ENCODE measurements at regions of chr10 and their contacts with region 1.

Region 1: DNA sequence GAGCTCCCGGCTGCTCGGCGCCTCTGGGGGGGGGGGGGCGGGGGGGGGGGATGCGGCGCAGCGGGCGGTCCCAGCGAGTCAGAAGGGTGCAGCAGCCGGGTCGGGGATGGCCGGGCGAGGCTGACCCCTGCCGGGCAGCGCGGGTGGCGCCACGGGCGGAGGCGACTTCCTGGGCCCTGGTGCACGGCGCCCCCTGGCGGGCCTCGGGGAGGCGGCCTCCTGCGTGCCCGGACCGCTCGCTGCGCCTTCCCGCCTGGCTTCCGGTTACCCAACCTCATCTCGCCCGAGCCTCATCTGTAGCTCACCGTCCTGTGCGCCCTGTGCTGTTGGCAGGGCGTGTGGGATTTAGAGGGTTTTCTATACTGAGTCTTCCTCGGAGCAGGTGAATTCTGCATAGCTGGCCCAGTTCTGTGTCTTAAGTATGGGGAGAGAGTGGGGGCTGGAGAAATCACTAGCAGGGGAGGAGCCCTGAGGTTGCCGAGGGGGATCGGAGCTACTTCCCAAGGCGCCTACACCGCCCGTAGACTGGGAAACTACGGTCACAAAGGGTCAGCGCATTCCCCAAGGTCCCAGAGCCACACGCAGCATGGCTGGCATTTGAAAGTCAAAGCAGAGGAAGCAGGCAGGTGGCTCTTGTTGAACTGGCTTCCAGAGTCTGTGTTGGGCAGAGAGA is 28.3 kb upstream of the WDFY4 start:
- DNase-seq: peak; percentile 58 to 92
- ATAC-seq: peak; percentile 79 to 91
- H3K4me3 ChIP-seq: peak overlapping the region; percentile 56
- H3K27ac ChIP-seq: peak overlapping the region; percentile 74 to 88
- H3K4me1 ChIP-seq: 0 out of 3 replicates have a peak, but pooled peaks cover 3% of the 10 kb centered on the region
- CTCF ChIP-seq: peak; percentile 99
- EP300 ChIP-seq: no peak
- POLR2A ChIP-seq: no peak
- RAD21 ChIP-seq: peak; percentile 67 to 95

Region 2: GRCh38 chr10:48289501-48290238 is 366.7 kb before region 1 on chr10:
- CTCF ChIA-PET with region 1: no interaction called
- POLR2A ChIA-PET with region 1: no interaction called
- DNase-seq: peak; percentile 50 to 68
- ATAC-seq: peak; percentile 85 to 91
- H3K4me3 ChIP-seq: no peak overlapping the region
- H3K27ac ChIP-seq: no peak overlapping the region
- H3K4me1 ChIP-seq: no peaks in the 10 kb centered on the region
- CTCF ChIP-seq: peak; percentile 69
- EP300 ChIP-seq: no peak
- POLR2A ChIP-seq: no peak
- RAD21 ChIP-seq: peak; percentile 60 to 68

Region 3: DNA sequence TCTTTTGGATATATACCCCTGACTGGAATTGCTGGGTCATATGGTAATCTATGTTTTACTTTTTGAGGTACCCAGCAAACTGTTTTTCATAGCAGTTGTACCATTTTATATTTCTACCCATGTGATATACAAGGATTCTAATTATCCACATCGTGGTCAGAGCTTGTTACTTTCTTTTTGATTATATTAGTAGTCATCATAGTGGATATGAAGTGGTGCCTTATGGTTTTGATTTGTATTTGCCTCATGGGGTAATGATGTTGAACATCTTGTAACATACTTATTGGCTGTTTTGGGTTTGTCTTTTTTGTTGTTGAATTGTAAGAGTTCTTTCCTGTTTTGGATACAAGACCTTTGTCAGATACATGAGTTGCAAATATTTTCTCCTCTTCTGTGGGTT is 298.2 kb before region 1 on chr10:
- CTCF ChIA-PET with region 1: interaction called, 97 read pairs
- POLR2A ChIA-PET with region 1: no interaction called
- DNase-seq: no peak
- ATAC-seq: no peak
- H3K4me3 ChIP-seq: no peak overlapping the region
- H3K27ac ChIP-seq: no peak overlapping the region
- H3K4me1 ChIP-seq: peaks cover 3% of the 10 kb centered on the region; the same call in 2 of the 3 replicates
- CTCF ChIP-seq: no peak
- EP300 ChIP-seq: no peak
- POLR2A ChIP-seq: no peak
- RAD21 ChIP-seq: no peak

Region 4: GRCh38 chr10:48444266-48444665 is 212.1 kb before region 1 on chr10:
- CTCF ChIA-PET with region 1: interaction called, 13 read pairs
- POLR2A ChIA-PET with region 1: no interaction called
- DNase-seq: peak in 1 of 2 experiments; percentile 57
- ATAC-seq: peak; percentile 45 to 60; a peak in 4 of 6 replicates
- H3K4me3 ChIP-seq: no peak overlapping the region
- H3K27ac ChIP-seq: no peak overlapping the region
- H3K4me1 ChIP-seq: no peaks in the 10 kb centered on the region
- CTCF ChIP-seq: peak; percentile 23; the same call in 2 of the 3 replicates
- EP300 ChIP-seq: no peak
- POLR2A ChIP-seq: no peak
- RAD21 ChIP-seq: peak; percentile 22 to 42; a peak in 2 of 5 replicates

Region 5: DNA sequence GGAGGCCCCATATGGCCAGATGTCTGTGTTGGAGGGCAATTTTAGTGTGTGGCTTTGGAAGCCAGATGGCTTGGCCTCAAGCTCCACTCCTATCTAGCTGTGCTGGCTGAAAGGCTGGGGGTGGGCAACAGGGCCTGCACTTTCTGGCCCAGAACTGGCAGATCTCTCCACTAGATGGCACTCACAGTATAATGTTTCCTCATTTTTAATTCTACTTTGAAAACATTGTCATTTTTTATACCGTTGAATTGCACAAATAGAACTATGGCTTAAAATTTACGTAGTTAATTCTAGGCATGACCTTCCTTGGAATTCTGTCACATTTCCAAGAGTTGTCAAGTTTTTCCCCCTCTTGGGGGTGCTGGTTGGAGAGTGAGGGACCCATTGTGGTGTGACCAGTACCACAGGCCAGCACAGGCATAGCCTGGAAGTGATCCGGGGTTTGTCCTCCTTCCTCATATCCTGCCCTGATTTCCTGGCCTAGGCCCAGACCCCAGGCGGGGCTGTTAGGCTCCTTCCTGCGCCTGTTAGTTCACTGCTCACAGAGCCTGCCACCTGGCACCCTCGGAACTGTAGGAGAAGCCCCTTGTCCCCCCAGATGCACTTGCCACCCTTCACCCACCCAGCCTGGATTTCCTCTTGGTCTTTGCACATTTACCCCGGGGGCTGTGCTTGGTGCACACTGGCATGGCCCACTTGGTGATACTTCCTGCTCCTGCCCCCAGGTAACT is 104.4 kb before region 1 on chr10:
- CTCF ChIA-PET with region 1: interaction called, 315 read pairs
- POLR2A ChIA-PET with region 1: interaction called, 3 read pairs
- DNase-seq: peak; percentile 37 to 61
- ATAC-seq: peak; percentile 75 to 89
- H3K4me3 ChIP-seq: no peak overlapping the region
- H3K27ac ChIP-seq: no peak overlapping the region
- H3K4me1 ChIP-seq: no peaks in the 10 kb centered on the region
- CTCF ChIP-seq: peak; percentile 77
- EP300 ChIP-seq: no peak
- POLR2A ChIP-seq: no peak
- RAD21 ChIP-seq: peak; percentile 69 to 73

Region 6: DNA sequence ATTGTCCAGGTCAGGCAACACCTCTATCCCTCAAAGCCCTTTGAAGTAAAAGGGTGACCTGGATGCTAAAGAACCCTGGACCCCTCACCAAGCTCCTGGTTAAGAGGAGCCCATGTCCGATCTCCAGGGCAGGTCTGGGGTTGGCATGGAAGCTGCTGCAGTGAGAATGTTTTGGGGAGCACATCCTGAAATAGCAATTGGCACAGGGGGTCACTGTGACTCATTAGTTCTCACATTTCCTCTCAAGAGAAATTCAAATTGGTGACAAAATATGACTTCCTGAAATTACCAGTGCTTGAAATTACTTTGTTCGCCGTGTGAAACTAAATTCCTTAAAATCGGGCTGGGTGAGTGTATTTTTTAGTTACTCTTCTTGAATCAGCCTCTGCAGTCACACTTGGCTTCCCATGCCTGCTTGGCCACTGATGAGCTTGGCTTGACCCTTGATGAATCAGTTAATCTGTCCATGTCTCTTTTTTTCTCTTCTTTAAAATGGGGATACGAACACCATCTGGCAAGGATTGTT is 32.7 kb before region 1 on chr10:
- CTCF ChIA-PET with region 1: interaction called, 39 read pairs
- POLR2A ChIA-PET with region 1: no interaction called
- DNase-seq: no peak
- ATAC-seq: no peak
- H3K4me3 ChIP-seq: no peak overlapping the region
- H3K27ac ChIP-seq: no peak overlapping the region
- H3K4me1 ChIP-seq: no peaks in the 10 kb centered on the region
- CTCF ChIP-seq: no peak
- EP300 ChIP-seq: no peak
- POLR2A ChIP-seq: no peak
- RAD21 ChIP-seq: no peak

Region 7: GRCh38 chr10:48981310-48981907 is 325.0 kb after region 1 on chr10:
- CTCF ChIA-PET with region 1: interaction called, 10 read pairs
- POLR2A ChIA-PET with region 1: no interaction called
- DNase-seq: peak; percentile 51 to 67
- ATAC-seq: peak; percentile 84 to 98; a peak in 4 of 6 replicates
- H3K4me3 ChIP-seq: no peak overlapping the region
- H3K27ac ChIP-seq: no peak overlapping the region
- H3K4me1 ChIP-seq: no peaks in the 10 kb centered on the region
- CTCF ChIP-seq: peak; percentile 71
- EP300 ChIP-seq: no peak
- POLR2A ChIP-seq: no peak
- RAD21 ChIP-seq: peak; percentile 69 to 74